ENCODE measurements at regions of chr2 and their contacts with region 1.

Region 1: DNA sequence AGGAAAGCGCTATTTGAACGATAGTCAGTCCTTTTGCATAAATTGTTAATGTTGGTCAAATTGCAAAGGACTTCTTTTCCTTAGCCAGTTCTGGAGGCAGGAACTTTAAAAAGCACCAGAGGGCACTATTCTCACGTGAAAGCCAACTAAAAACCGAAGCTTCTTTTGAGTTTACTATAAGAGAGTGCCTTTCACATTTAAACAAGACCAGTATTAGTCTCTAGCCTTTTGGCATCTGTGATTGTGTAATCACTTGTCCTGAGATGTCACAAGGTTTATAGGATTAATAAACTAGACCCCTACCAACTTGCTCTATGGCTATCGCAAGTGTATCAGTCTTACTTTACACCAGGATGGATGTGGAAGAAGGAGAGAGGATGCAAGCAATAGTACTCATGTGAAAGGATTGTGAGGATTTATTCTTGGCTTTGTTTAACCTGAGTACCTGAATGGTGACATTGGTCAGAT is 14.4 kb upstream of the STAT4 start:
- DNase-seq: peak; percentile 44
- H3K4me3 ChIP-seq: peak overlapping the region in 1 of 2 experiments; percentile 22; a peak in 1 of 4 replicates
- H3K27ac ChIP-seq: peak overlapping the region in 1 of 2 experiments; percentile 50; a peak in 1 of 4 replicates
- H3K4me1 ChIP-seq: peaks cover 8 to 20% of the 10 kb centered on the region in 2 experiments
- H3K27me3 ChIP-seq: no peaks in the 10 kb centered on the region
- CTCF ChIP-seq: peak; percentile 69
- EP300 ChIP-seq: no peak
- RAD21 ChIP-seq: peak; percentile 91

Region 2: DNA sequence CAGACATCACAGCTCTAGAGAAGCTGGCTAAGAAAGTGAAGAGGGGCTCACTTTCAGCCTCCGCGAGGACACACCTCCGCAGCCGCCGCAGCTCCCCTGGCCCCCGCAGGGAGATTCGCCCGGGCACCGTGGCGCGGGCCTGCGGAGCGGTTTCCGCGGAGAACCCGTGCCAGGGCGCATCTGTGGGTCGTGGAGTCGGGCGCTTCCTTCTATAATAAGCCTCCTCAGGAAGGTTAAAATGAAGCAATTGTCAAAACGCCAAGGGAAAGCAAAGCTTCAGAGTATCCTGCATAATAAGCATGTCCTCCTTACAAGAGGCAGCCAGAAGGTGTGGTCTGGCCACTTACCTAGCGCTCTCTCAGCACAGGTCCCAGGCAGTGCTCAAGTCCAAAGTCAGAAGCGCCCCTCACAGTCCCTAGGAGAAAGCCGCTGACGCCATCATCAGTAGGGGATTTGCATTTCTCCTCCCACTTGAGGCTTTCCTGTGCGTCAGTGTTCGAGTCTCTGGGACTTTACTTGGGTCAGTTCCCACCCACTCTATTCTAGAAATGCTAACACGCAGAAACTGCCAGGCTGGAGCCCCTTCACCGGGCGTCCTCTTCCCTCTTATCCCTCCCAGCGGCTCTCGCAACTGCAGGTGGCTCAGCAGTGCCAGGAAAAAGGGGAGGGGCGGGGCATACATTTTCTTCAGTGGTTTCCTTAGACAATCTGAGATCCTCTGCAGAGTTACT is 14.4 kb before region 1 on chr2 and contains the start of gene STAT4:
- CTCF ChIA-PET with region 1: interaction called, 13 read pairs
- POLR2A ChIA-PET with region 1: no interaction called
- DNase-seq: peak; percentile 40
- H3K4me3 ChIP-seq: peak within 1 kb of the TSS; percentile 47 to 49
- H3K27ac ChIP-seq: no peak within 1 kb of the TSS
- H3K4me1 ChIP-seq: no peaks in the 10 kb centered on the region; a peak in 1 of 4 replicates
- H3K27me3 ChIP-seq: no peaks in the 10 kb centered on the region
- CTCF ChIP-seq: no peak
- EP300 ChIP-seq: no peak
- RAD21 ChIP-seq: no peak
- polyA plus RNA-seq, gene STAT4: 0.12 and 0.19 TPM in 2 replicates

Region 3: DNA sequence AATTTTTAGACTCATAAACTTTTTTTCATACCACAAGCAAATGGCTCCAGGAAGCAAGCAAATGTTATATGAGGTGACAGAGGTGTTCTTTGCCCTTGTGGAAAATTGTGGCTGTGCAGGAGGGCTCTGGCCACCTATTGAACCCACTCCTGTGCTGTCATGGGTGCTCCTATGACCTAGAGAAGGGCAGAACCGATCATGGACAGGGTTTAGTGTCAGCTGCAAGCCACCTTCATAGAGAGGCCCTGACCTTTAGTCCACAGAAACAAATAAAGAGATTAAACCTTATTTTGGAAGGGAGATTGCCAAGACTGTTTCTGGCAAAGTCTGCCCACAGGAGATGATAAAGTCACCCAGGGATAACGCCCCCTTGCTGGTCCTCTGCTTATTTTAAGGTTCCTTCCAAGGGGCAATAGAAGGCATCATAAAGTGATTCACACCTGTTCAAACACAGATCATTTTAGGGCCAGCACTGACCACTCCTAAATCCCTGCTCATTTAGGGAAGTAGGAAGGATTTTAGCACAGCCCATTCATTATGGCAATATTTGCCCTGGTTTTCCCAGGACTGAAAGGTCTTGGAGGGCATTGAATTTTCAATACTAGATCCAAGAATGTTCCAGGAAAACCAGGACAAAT is 11.7 kb after region 1 on chr2:
- CTCF ChIA-PET with region 1: interaction called, 14 read pairs
- POLR2A ChIA-PET with region 1: no interaction called
- DNase-seq: no peak
- H3K4me3 ChIP-seq: no peak overlapping the region
- H3K27ac ChIP-seq: no peak overlapping the region
- H3K4me1 ChIP-seq: peaks cover 2 to 11% of the 10 kb centered on the region in 2 experiments
- H3K27me3 ChIP-seq: no peaks in the 10 kb centered on the region
- CTCF ChIP-seq: no peak
- EP300 ChIP-seq: no peak
- RAD21 ChIP-seq: no peak

Region 4: GRCh38 chr2:191218292-191218898 is 53.2 kb after region 1 on chr2:
- CTCF ChIA-PET with region 1: interaction called, 11 read pairs
- POLR2A ChIA-PET with region 1: no interaction called
- DNase-seq: peak; percentile 48
- H3K4me3 ChIP-seq: no peak overlapping the region
- H3K27ac ChIP-seq: no peak overlapping the region
- H3K4me1 ChIP-seq: no peaks in the 10 kb centered on the region; a peak in 3 of 4 replicates
- H3K27me3 ChIP-seq: no peaks in the 10 kb centered on the region
- CTCF ChIP-seq: peak; percentile 76
- EP300 ChIP-seq: no peak
- RAD21 ChIP-seq: peak; percentile 81

Region 5: GRCh38 chr2:191321861-191322686 is 156.9 kb after region 1 on chr2:
- CTCF ChIA-PET with region 1: no interaction called
- POLR2A ChIA-PET with region 1: no interaction called
- DNase-seq: peak; percentile 45
- H3K4me3 ChIP-seq: no peak overlapping the region
- H3K27ac ChIP-seq: peak overlapping the region; percentile 3 to 28; a peak in 2 of 4 replicates
- H3K4me1 ChIP-seq: peaks cover 37 to 48% of the 10 kb centered on the region in 2 experiments; a peak in 3 of 4 replicates
- H3K27me3 ChIP-seq: no peaks in the 10 kb centered on the region
- CTCF ChIP-seq: no peak
- EP300 ChIP-seq: peak in 1 of 2 experiments; percentile 80; a peak in 2 of 4 replicates
- RAD21 ChIP-seq: peak; percentile 8; the same call in 1 of the 2 replicates

Region 6: GRCh38 chr2:191539068-191539467 is 373.9 kb after region 1 on chr2:
- CTCF ChIA-PET with region 1: interaction called, 10 read pairs
- POLR2A ChIA-PET with region 1: no interaction called
- DNase-seq: peak; percentile 39
- H3K4me3 ChIP-seq: no peak overlapping the region
- H3K27ac ChIP-seq: peak overlapping the region in 1 of 2 experiments; percentile 78; a peak in 2 of 4 replicates
- H3K4me1 ChIP-seq: peaks cover 0 to 17% of the 10 kb centered on the region in 2 experiments; a peak in 2 of 4 replicates
- H3K27me3 ChIP-seq: no peaks in the 10 kb centered on the region
- CTCF ChIP-seq: peak; percentile 75
- EP300 ChIP-seq: no peak
- RAD21 ChIP-seq: peak; percentile 43

Region 7: DNA sequence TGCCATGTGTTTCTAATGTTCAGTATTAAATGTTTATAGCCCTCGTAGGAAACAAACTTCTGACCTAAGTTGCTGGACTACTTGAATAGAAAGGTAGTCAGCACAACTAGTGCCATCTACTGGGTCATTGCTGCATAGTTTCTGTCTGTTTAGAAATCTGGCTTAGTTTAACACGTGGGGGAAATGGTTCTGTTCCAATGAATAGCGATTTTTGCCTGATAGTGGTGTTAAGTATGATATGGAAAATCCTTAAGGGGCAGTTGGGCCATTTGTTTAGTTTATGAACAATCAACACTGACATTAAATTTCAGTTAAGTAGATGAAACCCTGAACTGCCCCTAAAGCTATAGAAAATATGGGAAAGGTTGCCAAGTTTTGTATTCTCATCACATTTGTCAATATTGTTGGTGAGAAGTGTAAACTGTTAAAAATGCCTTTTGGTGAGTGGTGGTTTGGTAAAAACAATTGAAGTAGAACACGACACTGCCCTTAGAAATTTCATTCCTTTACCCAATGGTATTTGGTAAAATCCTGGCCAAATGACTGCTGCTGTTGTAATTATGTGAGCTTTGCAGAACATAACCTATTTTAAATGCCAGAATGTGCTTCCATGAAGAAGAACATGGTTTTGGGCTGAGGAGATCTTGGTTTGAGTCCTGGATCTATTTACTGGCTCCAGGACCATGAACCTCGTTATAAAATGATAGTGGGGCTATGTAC is 526.0 kb after region 1 on chr2:
- CTCF ChIA-PET with region 1: interaction called, 12 read pairs
- POLR2A ChIA-PET with region 1: no interaction called
- DNase-seq: peak; percentile 62
- H3K4me3 ChIP-seq: no peak overlapping the region; a peak in 1 of 4 replicates
- H3K27ac ChIP-seq: peak overlapping the region in 1 of 2 experiments; percentile 38; a peak in 1 of 4 replicates
- H3K4me1 ChIP-seq: peaks cover 4 to 22% of the 10 kb centered on the region in 2 experiments; a peak in 3 of 4 replicates
- H3K27me3 ChIP-seq: no peaks in the 10 kb centered on the region
- CTCF ChIP-seq: peak; percentile 82
- EP300 ChIP-seq: peak in 1 of 2 experiments; percentile 51; a peak in 1 of 4 replicates
- RAD21 ChIP-seq: peak; percentile 78

Measured in SK-N-SH (cell line).